PC-9 (cell line): ENCODE measurements at regions of chr2 and their contacts with region 1.

Region 1: GRCh38 chr2:114742245-114742644 is 299.8 kb downstream of the DPP10 start:
- DNase-seq: no peak
- H3K4me3 ChIP-seq: no peak overlapping the region
- H3K27ac ChIP-seq: no peak overlapping the region
- H3K4me1 ChIP-seq: no peaks in the 10 kb centered on the region
- H3K27me3 ChIP-seq: no peaks in the 10 kb centered on the region
- CTCF ChIP-seq: no peak

Region 2: GRCh38 chr2:114762986-114763385 is 20.7 kb after region 1 on chr2:
- CTCF ChIA-PET with region 1: no interaction called
- POLR2A ChIA-PET with region 1: no interaction called
- intact Hi-C with region 1: loop called (anchors 1 kb)
- DNase-seq: no peak
- H3K4me3 ChIP-seq: no peak overlapping the region
- H3K27ac ChIP-seq: no peak overlapping the region
- H3K4me1 ChIP-seq: no peaks in the 10 kb centered on the region
- H3K27me3 ChIP-seq: no peaks in the 10 kb centered on the region; the same call in 1 of the 2 replicates
- CTCF ChIP-seq: no peak

Region 3: DNA sequence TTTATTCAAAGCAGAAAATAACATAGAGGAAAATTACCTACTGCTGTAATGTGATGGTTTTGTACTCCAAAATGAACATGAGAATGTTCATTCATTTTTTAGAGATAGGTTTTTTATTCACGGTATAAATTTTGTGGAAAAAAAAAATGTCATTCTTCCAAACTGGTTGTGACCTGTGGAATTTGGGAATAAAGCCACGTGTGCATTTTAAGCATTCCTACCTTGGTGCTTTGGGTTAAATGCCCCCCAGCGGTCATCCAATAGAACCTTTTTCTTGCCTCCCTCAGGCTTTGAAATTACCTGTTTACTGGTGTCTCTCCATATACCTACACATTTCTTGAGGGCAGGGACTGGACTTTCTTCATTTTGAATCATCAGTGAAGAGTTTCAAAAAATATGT is 440.9 kb after region 1 on chr2:
- CTCF ChIA-PET with region 1: no interaction called
- POLR2A ChIA-PET with region 1: no interaction called
- intact Hi-C with region 1: no loop called
- DNase-seq: no peak
- H3K4me3 ChIP-seq: no peak overlapping the region
- H3K27ac ChIP-seq: no peak overlapping the region
- H3K4me1 ChIP-seq: no peaks in the 10 kb centered on the region
- H3K27me3 ChIP-seq: peaks cover 10% of the 10 kb centered on the region
- CTCF ChIP-seq: no peak